CD8-positive, alpha-beta T cell (primary cell): ENCODE measurements at regions of chr6 and their contacts with region 1.

Region 1: DNA sequence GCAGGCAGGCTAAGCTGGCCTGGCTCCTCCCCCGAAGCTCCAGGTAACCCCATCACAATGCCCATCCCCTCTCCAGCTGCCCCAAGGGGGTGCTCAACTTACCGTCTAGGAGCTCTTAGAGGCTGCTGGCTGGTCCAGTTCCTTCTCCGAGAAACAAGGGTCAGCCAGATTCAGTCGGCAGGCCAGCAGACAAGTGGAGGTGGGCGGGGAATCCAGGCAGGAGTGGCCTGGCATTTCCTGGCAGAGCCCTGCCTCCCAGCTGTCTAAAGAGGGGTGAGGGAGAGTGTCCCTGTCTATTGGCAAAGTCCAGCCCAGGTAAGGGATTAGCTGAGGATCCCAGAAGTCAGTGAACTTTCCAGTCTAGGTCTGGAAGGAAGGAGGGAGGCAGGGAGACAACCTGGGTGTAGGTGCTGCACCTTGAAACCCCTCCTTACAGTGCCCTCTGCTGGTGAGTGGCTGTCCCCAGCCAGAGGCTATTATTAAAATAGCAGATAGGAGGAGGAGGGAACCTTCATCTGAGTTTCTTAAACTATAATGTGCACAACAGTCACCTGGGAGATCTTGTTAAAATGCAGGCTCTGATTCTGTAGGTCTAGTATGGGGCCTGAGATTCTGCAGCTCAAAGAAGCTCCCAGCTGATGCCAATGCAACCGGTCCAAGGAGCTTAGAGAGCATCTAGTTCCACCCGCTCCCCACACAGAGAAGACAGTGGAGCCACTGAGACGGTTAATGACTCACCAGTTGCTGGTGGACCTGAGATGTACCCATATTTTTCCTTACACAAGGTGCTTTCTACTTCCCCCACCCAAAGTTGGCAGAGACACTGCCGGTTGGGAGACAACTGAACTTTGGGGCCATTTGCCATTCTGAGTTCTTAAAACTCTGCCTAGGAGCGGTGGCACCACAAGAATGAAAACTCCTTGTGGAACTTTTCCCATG is at the start of gene UNC5CL:
- DNase-seq: peak; percentile 16 to 62 (median 56)
- ATAC-seq: peak; percentile 62
- H3K4me3 ChIP-seq: no peak within 1 kb of the TSS
- H3K4me3 Mint-ChIP-seq: no peak within 1 kb of the TSS
- H3K27ac ChIP-seq: no peak within 1 kb of the TSS
- H3K27ac Mint-ChIP-seq: no peak within 1 kb of the TSS
- H3K4me1 ChIP-seq: no peaks in the 10 kb centered on the region
- H3K4me1 Mint-ChIP-seq: no peaks in the 10 kb centered on the region
- H3K27me3 ChIP-seq: no peaks in the 10 kb centered on the region
- H3K27me3 Mint-ChIP-seq: no peaks in the 10 kb centered on the region
- CTCF ChIP-seq: peak; percentile 55
- total RNA-seq, gene UNC5CL: 1.4 to 2.3 TPM

Region 2: GRCh38 chr6:39347906-39348585 is 1691.3 kb before region 1 on chr6:
- CTCF ChIA-PET with region 1: no interaction called
- POLR2A ChIA-PET with region 1: no interaction called
- intact Hi-C with region 1: loop called in 1 of 2 experiments (anchors 5 kb)
- DNase-seq: peak in 8 of 9 experiments; percentile 5 to 66 (median 48)
- ATAC-seq: peak; percentile 48
- H3K4me3 ChIP-seq: no peak overlapping the region
- H3K4me3 Mint-ChIP-seq: no peak overlapping the region
- H3K27ac ChIP-seq: no peak overlapping the region
- H3K27ac Mint-ChIP-seq: no peak overlapping the region
- H3K4me1 ChIP-seq: no peaks in the 10 kb centered on the region
- H3K4me1 Mint-ChIP-seq: no peaks in the 10 kb centered on the region
- H3K27me3 ChIP-seq: no peaks in the 10 kb centered on the region
- H3K27me3 Mint-ChIP-seq: peaks cover 4% of the 10 kb centered on the region
- CTCF ChIP-seq: peak; percentile 75

Region 3: DNA sequence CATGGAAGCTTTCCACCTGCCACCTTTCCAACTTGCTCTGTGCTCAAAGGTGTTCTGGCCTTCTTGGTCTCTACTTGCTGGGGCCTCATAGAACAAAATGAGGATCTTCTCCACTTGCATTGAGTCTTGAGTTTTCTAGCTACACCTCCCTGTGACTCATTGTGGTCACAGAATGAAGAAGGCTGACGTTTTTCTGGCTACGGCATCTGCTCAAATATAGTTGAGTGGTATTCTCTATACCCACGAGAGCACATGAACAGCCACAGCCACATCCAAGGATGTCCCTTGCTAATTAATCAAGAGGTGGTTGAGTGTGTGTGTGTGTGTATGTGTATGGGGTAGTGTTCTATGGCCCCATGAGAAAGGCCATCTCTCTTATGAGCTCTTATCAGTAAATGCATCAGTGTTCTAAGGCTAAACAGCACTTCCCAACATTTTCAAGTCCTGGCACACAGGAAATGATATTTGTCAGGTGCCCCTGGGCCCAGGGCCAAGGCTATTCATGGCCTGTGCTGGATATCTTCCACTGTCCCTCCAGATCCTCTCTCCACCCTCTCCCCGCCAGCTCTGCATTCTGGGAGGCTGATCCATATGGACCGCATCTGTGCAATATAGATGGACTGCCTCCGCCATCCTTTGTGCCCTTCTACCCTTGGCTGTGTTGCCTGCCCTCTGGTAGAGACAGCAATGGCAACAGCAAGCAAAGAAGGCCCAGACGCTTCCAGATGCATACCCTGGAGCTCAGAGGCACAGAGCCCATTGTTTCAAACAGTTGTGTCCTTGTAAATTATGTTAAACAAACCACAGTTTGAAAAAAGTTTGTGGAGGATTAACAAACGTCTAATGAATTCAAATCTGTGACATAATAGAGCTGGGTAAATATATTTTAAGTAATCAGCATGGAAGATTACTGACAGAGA is 602.4 kb before region 1 on chr6:
- CTCF ChIA-PET with region 1: no interaction called
- POLR2A ChIA-PET with region 1: no interaction called
- intact Hi-C with region 1: no loop called
- DNase-seq: peak in 2 of 9 experiments; percentile 65 to 71
- ATAC-seq: no peak
- H3K4me3 ChIP-seq: no peak overlapping the region
- H3K4me3 Mint-ChIP-seq: no peak overlapping the region
- H3K27ac ChIP-seq: peak overlapping the region in 1 of 2 experiments; percentile 39
- H3K27ac Mint-ChIP-seq: no peak overlapping the region
- H3K4me1 ChIP-seq: no peaks in the 10 kb centered on the region
- H3K4me1 Mint-ChIP-seq: no peaks in the 10 kb centered on the region
- H3K27me3 ChIP-seq: no peaks in the 10 kb centered on the region
- H3K27me3 Mint-ChIP-seq: no peaks in the 10 kb centered on the region
- CTCF ChIP-seq: no peak

Region 4: DNA sequence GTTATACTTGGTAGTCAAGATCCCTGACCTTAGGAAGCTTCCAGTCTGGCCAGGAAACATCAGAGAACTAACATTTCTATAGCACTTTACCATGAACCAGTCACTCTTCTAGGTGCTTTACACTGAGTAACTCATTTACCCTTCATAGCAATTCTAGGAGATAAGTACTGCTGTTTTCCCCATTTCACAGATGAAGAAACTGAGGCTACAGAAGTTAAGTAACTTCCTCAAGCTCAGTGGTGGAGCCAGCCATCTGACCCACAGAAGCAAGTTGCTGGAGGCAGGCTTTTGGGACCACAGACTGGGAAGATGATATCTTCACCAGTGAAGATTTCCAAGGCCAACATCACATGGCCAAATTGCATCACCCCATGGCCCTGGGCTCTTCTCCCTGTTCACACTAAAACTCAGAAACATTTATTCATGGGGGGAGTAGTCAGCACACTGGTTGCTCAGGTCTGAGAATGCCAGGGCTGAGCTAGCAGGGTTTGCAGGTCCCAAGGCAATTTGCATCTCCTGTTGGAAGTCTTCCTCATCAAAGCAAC is 70.6 kb before region 1 on chr6:
- CTCF ChIA-PET with region 1: no interaction called
- POLR2A ChIA-PET with region 1: no interaction called
- intact Hi-C with region 1: no loop called
- DNase-seq: no peak
- ATAC-seq: no peak
- H3K4me3 ChIP-seq: no peak overlapping the region
- H3K4me3 Mint-ChIP-seq: no peak overlapping the region
- H3K27ac ChIP-seq: no peak overlapping the region
- H3K27ac Mint-ChIP-seq: no peak overlapping the region
- H3K4me1 ChIP-seq: no peaks in the 10 kb centered on the region
- H3K4me1 Mint-ChIP-seq: no peaks in the 10 kb centered on the region
- H3K27me3 ChIP-seq: no peaks in the 10 kb centered on the region
- H3K27me3 Mint-ChIP-seq: peaks cover 12% of the 10 kb centered on the region
- CTCF ChIP-seq: no peak

Region 5: DNA sequence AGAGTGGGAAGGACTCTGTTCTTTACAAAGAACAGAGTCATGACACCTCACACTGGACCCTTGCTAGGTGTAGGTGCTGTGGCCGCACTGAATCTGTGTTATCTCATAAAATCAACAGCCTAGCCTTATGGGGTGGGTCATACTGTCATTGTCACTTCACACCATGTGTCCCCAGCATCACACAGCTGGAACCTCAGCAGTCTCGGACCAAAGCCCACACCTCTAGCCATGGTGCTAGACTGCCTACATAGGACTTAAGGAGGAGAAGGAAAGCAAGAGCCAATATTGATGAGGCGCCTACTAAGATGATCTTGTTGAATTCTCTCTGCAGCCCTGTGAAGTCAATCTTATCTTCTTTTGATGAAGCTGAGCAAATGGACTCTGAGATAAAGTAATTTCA is 31.3 kb before region 1 on chr6:
- CTCF ChIA-PET with region 1: interaction called, 10 read pairs
- POLR2A ChIA-PET with region 1: no interaction called
- intact Hi-C with region 1: loop called in 1 of 2 experiments (anchors 1 kb)
- DNase-seq: no peak
- ATAC-seq: no peak
- H3K4me3 ChIP-seq: no peak overlapping the region
- H3K4me3 Mint-ChIP-seq: no peak overlapping the region
- H3K27ac ChIP-seq: no peak overlapping the region
- H3K27ac Mint-ChIP-seq: no peak overlapping the region
- H3K4me1 ChIP-seq: no peaks in the 10 kb centered on the region
- H3K4me1 Mint-ChIP-seq: no peaks in the 10 kb centered on the region
- H3K27me3 ChIP-seq: peaks cover 0 to 4% of the 10 kb centered on the region in 2 experiments
- H3K27me3 Mint-ChIP-seq: peaks cover 14% of the 10 kb centered on the region
- CTCF ChIP-seq: no peak

Region 6: GRCh38 chr6:41051873-41052272 is 12.5 kb after region 1 on chr6:
- CTCF ChIA-PET with region 1: interaction called, 19 read pairs
- POLR2A ChIA-PET with region 1: no interaction called
- intact Hi-C with region 1: no loop called
- DNase-seq: peak in 1 of 9 experiments; percentile 22
- ATAC-seq: peak; percentile 44
- H3K4me3 ChIP-seq: no peak overlapping the region
- H3K4me3 Mint-ChIP-seq: peak overlapping the region; percentile 9
- H3K27ac ChIP-seq: no peak overlapping the region
- H3K27ac Mint-ChIP-seq: peak overlapping the region; percentile 53
- H3K4me1 ChIP-seq: peaks cover 15% of the 10 kb centered on the region
- H3K4me1 Mint-ChIP-seq: peaks cover 17% of the 10 kb centered on the region
- H3K27me3 ChIP-seq: no peaks in the 10 kb centered on the region
- H3K27me3 Mint-ChIP-seq: no peaks in the 10 kb centered on the region
- CTCF ChIP-seq: no peak